B cell (primary cell): ENCODE measurements at regions of chr22 and their contacts with region 1.

Region 1: DNA sequence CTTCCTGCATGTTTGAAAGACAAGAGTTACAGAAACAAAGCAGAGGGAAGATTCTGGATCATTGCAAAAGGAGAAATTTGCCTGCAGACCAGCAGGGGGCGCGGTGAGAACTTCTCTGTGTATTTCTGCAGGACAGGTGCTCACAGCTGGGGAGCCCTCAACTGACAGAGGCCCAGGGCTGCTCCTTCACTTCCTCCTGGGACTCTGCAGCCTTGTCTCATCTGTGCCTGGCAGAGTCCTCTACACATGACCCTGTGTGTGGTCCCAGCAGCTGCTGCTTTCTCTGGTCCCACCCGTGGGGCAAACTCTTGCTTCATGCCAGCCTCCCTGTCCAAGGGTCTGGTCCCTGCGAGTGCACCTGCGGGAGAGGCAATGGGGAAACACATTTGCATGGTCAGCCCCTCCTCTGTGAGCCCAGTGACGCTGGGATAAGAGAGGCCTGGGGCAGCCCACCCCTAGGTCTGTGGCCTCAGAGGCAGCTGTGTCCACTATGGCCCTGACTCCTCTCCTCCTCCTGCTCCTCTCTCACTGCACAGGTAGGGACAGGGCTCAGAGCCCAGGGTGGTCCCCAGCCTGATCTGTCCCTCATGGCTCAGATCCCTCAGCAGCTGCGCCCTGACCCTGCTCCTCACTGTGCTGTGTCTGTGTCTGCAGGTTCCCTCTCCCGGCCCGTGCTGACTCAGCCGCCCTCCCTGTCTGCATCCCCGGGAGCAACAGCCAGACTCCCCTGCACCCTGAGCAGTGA is 43.2 kb upstream of the VPREB1 start:
- DNase-seq: peak; percentile 69
- ATAC-seq: peak; percentile 72
- H3K4me3 ChIP-seq: no peak overlapping the region
- H3K4me3 Mint-ChIP-seq: peak overlapping the region; percentile 59
- H3K27ac ChIP-seq: peak overlapping the region; percentile 37 to 47
- H3K27ac Mint-ChIP-seq: peak overlapping the region; percentile 71
- H3K4me1 ChIP-seq: peaks cover 58 to 60% of the 10 kb centered on the region in 2 donors
- H3K4me1 Mint-ChIP-seq: peaks cover 61% of the 10 kb centered on the region
- H3K27me3 ChIP-seq: no peaks in the 10 kb centered on the region
- H3K27me3 Mint-ChIP-seq: no peaks in the 10 kb centered on the region
- CTCF ChIP-seq: peak; percentile 80

Region 2: DNA sequence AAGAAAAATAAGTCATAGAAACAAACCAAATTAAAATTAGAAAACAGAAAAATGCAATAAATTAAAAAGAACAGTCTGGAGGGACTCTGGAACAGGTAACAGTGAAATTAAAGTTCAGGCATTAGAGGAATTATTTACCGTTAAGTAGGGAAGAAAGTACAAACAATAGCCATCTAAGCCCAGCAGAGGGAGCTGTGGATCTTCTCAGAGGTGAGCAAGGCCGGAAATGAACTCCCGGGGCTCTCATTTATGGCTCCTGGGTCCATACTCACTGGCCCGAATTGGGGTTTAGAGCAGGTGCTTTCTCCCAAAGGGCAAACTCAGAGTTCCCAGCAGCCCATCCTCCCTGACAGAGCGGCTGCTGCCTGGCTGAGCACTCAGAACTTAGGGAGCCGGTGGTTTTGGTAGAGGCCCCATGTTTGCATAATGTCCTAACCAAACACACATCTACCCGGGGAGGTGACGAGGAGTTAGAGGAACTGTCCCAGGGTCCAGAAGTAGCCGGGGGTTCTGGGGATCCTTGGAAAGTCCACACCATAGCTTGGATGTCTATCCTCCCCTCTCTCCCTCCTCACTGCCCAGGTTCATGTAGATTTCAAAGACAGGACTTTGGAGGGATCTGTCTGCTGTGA is 44.5 kb before region 1 on chr22:
- CTCF ChIA-PET with region 1: interaction called, 166 read pairs
- POLR2A ChIA-PET with region 1: interaction called, 24 read pairs
- intact Hi-C with region 1: no loop called
- DNase-seq: peak; percentile 91
- ATAC-seq: peak; percentile 79
- H3K4me3 ChIP-seq: peak overlapping the region in 2 of 5 experiments; percentile 11 to 17
- H3K4me3 Mint-ChIP-seq: peak overlapping the region; percentile 86
- H3K27ac ChIP-seq: peak overlapping the region; percentile 92
- H3K27ac Mint-ChIP-seq: peak overlapping the region; percentile 99
- H3K4me1 ChIP-seq: peaks cover 42 to 53% of the 10 kb centered on the region in 2 donors
- H3K4me1 Mint-ChIP-seq: peaks cover 51% of the 10 kb centered on the region
- H3K27me3 ChIP-seq: no peaks in the 10 kb centered on the region
- H3K27me3 Mint-ChIP-seq: no peaks in the 10 kb centered on the region
- CTCF ChIP-seq: peak; percentile 92

Region 3: DNA sequence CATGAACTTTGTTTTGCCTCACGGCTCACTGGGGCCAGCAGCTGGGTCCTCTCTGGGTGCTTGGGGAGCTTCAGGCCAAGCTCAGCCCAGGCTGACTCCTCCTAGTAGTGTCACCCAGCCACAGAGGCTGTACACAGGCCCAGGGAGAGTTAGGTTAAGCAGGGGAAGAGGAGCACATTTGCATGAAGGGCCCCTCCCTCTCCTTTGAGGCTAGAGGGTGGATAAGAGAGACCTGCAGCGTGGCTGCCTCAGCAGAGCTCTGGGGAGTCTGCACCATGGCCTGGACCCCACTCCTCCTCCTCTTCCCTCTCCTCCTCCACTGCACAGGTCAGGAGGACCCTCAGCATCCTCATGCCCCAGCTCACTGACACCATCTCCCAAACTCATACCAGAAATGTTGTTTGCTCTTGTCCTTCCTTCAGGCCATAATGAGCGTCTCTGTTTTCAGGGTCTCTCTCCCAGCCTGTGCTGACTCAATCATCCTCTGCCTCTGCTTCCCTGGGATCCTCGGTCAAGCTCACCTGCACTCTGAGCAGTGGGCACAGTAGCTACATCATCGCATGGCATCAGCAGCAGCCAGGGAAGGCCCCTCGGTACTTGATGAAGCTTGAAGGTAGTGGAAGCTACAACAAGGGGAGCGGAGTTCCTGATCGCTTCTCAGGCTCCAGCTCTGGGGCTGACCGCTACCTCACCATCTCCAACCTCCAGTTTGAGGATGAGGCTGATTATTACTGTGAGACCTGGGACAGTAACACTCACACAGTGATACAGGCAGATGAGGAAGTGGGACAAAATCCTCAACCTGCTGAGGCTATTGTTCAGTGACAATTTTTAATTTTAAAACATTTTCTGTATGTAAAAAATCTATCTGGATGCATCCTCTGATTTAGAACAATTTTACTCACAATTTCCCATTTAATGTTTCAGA is 39.2 kb before region 1 on chr22:
- CTCF ChIA-PET with region 1: interaction called, 166 read pairs
- POLR2A ChIA-PET with region 1: interaction called, 38 read pairs
- intact Hi-C with region 1: no loop called
- DNase-seq: peak; percentile 80
- ATAC-seq: peak; percentile 95
- H3K4me3 ChIP-seq: peak overlapping the region in 4 of 5 experiments; percentile 14 to 70 (median 38)
- H3K4me3 Mint-ChIP-seq: peak overlapping the region; percentile 89
- H3K27ac ChIP-seq: peak overlapping the region; percentile 96 to 98
- H3K27ac Mint-ChIP-seq: peak overlapping the region; percentile 98
- H3K4me1 ChIP-seq: peaks cover 75 to 82% of the 10 kb centered on the region in 2 donors
- H3K4me1 Mint-ChIP-seq: peaks cover 85% of the 10 kb centered on the region
- H3K27me3 ChIP-seq: no peaks in the 10 kb centered on the region
- H3K27me3 Mint-ChIP-seq: no peaks in the 10 kb centered on the region
- CTCF ChIP-seq: no peak

Region 4: DNA sequence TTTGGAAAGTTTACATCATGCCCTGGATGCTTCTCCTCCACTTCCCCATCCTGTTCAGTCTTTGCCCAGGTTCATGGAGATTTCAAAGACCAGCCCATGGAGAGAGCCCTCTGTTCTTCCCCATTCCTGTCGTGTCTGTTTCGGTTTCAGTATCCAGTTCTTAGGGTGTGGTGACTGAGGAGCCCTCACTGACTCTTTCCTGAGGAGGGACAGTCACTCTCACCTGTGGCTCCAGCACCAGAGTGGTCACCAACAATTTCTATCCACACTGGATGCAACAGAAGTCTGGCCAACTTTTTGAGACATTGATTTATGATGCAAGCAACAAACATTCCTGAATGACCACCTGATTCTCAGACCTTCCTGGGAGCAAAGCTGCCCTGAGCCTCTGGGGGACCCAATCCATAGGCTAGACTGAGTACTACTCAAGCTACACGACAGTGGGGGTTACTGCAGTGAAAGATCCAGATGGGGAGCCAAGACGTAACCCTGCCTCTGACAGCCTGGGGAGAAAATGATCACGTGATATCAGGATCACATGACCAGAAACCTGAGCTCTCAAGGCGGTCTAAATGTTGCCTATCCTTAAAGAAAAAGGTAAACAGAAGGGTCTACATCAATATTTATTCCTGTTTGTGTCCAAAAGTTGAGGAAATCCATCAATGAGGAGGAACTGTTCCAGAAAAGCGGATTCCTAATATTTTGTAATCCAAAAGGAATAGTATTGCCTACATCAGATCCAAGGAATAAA is 33.0 kb before region 1 on chr22:
- CTCF ChIA-PET with region 1: interaction called, 166 read pairs
- POLR2A ChIA-PET with region 1: interaction called, 38 read pairs
- intact Hi-C with region 1: no loop called
- DNase-seq: peak; percentile 74
- ATAC-seq: peak; percentile 55
- H3K4me3 ChIP-seq: peak overlapping the region; percentile 20 to 59 (median 40)
- H3K4me3 Mint-ChIP-seq: peak overlapping the region; percentile 92
- H3K27ac ChIP-seq: peak overlapping the region; percentile 96 to 98
- H3K27ac Mint-ChIP-seq: peak overlapping the region; percentile 100
- H3K4me1 ChIP-seq: peaks cover 80 to 88% of the 10 kb centered on the region in 2 donors
- H3K4me1 Mint-ChIP-seq: peaks cover 81% of the 10 kb centered on the region
- H3K27me3 ChIP-seq: no peaks in the 10 kb centered on the region
- H3K27me3 Mint-ChIP-seq: no peaks in the 10 kb centered on the region
- CTCF ChIP-seq: no peak

Region 5: GRCh38 chr22:22181341-22181850 is 20.0 kb before region 1 on chr22:
- CTCF ChIA-PET with region 1: interaction called, 71 read pairs
- POLR2A ChIA-PET with region 1: no interaction called
- intact Hi-C with region 1: no loop called
- DNase-seq: no peak
- ATAC-seq: no peak
- H3K4me3 ChIP-seq: no peak overlapping the region
- H3K4me3 Mint-ChIP-seq: no peak overlapping the region
- H3K27ac ChIP-seq: no peak overlapping the region
- H3K27ac Mint-ChIP-seq: no peak overlapping the region
- H3K4me1 ChIP-seq: peaks cover 18 to 27% of the 10 kb centered on the region in 2 donors
- H3K4me1 Mint-ChIP-seq: peaks cover 37% of the 10 kb centered on the region
- H3K27me3 ChIP-seq: no peaks in the 10 kb centered on the region
- H3K27me3 Mint-ChIP-seq: no peaks in the 10 kb centered on the region
- CTCF ChIP-seq: no peak

Region 6: DNA sequence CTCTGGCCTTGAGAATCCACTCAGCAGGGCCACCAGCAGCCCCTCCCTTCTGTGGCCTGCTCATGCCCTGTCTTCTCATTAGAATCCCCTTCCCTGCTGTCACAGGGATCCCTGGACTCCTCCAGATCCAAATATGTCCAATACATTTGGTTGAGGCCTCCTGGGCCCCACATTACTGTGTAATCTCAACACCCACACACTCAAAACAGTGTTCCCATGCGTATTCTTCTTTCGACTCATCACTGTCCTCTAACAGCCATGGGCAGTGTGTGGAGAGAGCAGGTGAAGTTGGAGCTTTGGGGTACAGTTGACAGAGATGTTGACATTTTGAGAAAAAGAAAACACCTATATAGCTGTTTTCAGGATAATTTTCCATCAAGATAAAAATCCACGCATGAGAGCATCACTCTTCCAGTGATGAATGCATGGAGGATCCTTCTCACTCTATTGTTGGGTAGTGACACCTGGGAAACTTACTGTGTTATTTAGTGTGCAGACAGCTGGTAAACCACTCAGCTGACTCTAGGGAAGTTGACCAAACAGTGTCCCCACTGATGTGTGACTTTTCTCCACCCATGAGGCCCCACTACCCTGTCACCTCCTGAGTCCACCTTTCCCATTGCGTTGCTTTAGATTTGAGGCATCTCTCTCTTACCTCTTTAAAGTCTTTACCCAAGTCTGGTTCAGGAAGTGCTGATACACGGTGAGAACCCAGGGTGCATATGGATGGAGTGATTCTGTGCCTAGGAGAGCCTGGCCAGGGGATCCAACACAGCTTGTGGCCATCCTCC is 14.5 kb after region 1 on chr22:
- CTCF ChIA-PET with region 1: interaction called, 111 read pairs
- POLR2A ChIA-PET with region 1: no interaction called
- intact Hi-C with region 1: no loop called
- DNase-seq: peak; percentile 57
- ATAC-seq: peak; percentile 69
- H3K4me3 ChIP-seq: peak overlapping the region in 1 of 5 experiments; percentile 6
- H3K4me3 Mint-ChIP-seq: peak overlapping the region; percentile 59
- H3K27ac ChIP-seq: peak overlapping the region; percentile 26 to 41
- H3K27ac Mint-ChIP-seq: peak overlapping the region; percentile 70
- H3K4me1 ChIP-seq: peaks cover 37 to 54% of the 10 kb centered on the region in 2 donors
- H3K4me1 Mint-ChIP-seq: peaks cover 58% of the 10 kb centered on the region
- H3K27me3 ChIP-seq: no peaks in the 10 kb centered on the region
- H3K27me3 Mint-ChIP-seq: no peaks in the 10 kb centered on the region
- CTCF ChIP-seq: no peak

Region 7: GRCh38 chr22:22235558-22235957 is 34.2 kb after region 1 on chr22:
- CTCF ChIA-PET with region 1: interaction called, 65 read pairs
- POLR2A ChIA-PET with region 1: no interaction called
- intact Hi-C with region 1: loop called (anchors 1 kb)
- DNase-seq: peak; percentile 67
- ATAC-seq: peak; percentile 24
- H3K4me3 ChIP-seq: no peak overlapping the region
- H3K4me3 Mint-ChIP-seq: peak overlapping the region; percentile 37
- H3K27ac ChIP-seq: no peak overlapping the region
- H3K27ac Mint-ChIP-seq: peak overlapping the region; percentile 53
- H3K4me1 ChIP-seq: peaks cover 16 to 27% of the 10 kb centered on the region in 2 donors
- H3K4me1 Mint-ChIP-seq: peaks cover 24% of the 10 kb centered on the region
- H3K27me3 ChIP-seq: no peaks in the 10 kb centered on the region
- H3K27me3 Mint-ChIP-seq: no peaks in the 10 kb centered on the region
- CTCF ChIP-seq: peak; percentile 48